Lower leg skin (tissue), 4 donors: ENCODE measurements at regions of chr20 and their contacts with region 1.

Region 1: DNA sequence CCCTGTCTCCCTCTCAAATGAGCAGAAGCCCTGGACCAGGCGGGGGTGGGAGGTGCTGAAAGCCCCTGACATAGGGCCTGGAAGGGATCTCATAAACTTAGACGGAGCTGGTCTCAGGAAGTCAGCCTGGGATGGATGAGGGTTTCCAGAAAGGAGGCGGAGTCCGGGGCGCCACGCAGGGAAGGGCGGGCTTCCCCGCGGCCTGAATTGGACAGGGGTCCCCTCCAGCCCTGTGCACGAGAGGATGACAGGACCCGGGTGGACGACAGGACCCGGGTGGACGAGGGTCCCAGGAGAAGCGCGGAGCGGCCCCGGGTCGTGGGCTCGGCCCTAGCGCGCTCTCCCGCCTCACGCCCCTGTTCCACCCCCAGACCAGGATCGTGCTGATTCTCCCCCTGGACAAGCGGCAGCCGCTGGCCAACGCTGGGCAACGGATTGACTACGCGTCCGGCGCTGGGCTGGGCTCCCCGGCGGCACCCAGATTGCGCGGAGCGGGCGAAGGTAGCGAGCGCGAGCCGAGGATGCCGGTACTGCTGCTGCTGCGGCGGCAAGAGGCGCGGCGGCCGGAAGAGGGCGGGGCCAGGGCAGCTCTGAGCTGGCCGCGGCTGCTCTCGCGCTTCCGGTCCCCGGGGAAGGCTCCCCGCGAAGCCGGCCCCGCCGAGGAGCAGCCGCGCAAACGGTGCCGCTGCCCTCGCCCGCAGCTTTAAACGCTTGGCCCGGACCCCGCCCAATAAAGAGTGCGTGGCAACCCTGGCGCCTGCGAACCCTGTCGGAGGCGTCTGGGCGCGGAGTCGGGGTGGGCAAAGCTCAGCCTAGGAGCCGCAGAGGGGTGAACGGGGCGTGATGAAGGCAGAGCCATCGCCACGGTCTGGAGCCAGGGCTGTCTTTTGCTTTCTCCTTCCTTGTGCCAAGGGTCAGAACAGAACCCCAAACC is 1.3 kb downstream of the C20orf144 start:
- DNase-seq: peak in 1 of 2 donors; percentile 96
- H3K4me3 ChIP-seq: peak overlapping the region; percentile 54
- CTCF ChIP-seq: no peak
- POLR2A ChIP-seq: peak in 1 of 2 donors; percentile 45

Region 2: DNA sequence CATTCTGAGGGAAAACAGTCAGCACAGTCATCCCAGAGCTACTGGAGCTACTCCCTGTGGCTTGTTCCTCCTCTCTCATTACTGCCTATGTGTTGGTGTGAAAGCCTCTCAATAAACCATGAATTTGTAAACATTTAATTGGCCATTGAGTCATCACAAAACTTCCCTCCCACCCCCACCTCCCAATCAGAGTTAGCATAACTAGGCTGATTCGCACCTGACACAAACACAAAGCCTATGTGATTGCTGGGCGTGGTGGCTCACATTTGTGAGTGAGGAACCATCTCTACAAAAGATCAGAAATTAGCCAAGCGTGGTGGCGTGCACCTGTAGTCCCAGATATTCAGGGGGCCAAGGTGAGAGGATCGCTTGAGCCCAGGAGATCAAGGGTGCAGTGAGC is 202.7 kb before region 1 on chr20:
- intact Hi-C with region 1: loop called (anchors 5 kb)
- DNase-seq: no peak
- H3K4me3 ChIP-seq: no peak overlapping the region
- CTCF ChIP-seq: no peak
- POLR2A ChIP-seq: no peak

Region 3: GRCh38 chr20:33576432-33577125 is 86.8 kb before region 1 on chr20:
- intact Hi-C with region 1: no loop called
- DNase-seq: no peak
- H3K4me3 ChIP-seq: no peak overlapping the region
- CTCF ChIP-seq: no peak
- POLR2A ChIP-seq: no peak

Region 4: GRCh38 chr20:33740189-33740588 is 76.8 kb after region 1 on chr20:
- intact Hi-C with region 1: no loop called
- DNase-seq: no peak
- H3K4me3 ChIP-seq: no peak overlapping the region
- CTCF ChIP-seq: no peak
- POLR2A ChIP-seq: no peak

Region 5: DNA sequence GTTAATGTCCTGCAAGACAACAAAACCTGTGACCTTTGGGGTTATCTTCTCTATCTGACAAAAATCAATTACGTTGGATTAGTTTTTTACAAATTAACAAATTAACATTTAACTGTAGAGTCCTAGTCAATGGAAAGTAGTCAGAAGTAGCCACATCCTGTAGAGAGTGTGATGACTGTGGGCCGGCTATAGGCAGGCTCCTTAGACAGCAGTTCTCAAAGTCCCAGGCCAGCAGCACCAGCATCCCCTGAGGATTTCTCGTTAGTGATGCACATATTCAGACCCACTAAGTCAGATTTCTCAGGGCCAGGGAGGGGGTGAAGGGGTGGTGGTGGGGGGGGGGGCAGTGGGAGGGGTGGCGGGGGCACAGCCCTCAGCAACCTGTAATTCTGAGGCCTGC is 105.6 kb after region 1 on chr20:
- intact Hi-C with region 1: no loop called
- DNase-seq: no peak
- H3K4me3 ChIP-seq: no peak overlapping the region
- CTCF ChIP-seq: no peak
- POLR2A ChIP-seq: no peak